PC-3 (cell line): ENCODE measurements at regions of chr1 and their contacts with region 1.

Region 1: GRCh38 chr1:197130677-197131304 is 15.7 kb downstream of the ASPM start:
- DNase-seq: peak; percentile 64
- ATAC-seq: peak; percentile 76
- H3K4me3 ChIP-seq: peak overlapping the region; percentile 35
- H3K27ac ChIP-seq: peak overlapping the region; percentile 54
- H3K4me1 ChIP-seq: peaks cover 27% of the 10 kb centered on the region
- H3K27me3 ChIP-seq: no peaks in the 10 kb centered on the region
- CTCF ChIP-seq: no peak

Region 2: GRCh38 chr1:196997423-196997822 is 133.4 kb before region 1 on chr1:
- CTCF ChIA-PET with region 1: no interaction called
- POLR2A ChIA-PET with region 1: no interaction called
- intact Hi-C with region 1: no loop called
- DNase-seq: peak; percentile 11
- ATAC-seq: no peak
- H3K4me3 ChIP-seq: no peak overlapping the region
- H3K27ac ChIP-seq: no peak overlapping the region
- H3K4me1 ChIP-seq: no peaks in the 10 kb centered on the region
- H3K27me3 ChIP-seq: no peaks in the 10 kb centered on the region
- CTCF ChIP-seq: no peak

Region 3: GRCh38 chr1:197027378-197027777 is 103.4 kb before region 1 on chr1:
- CTCF ChIA-PET with region 1: no interaction called
- POLR2A ChIA-PET with region 1: no interaction called
- intact Hi-C with region 1: loop called (anchors 5 kb)
- DNase-seq: peak; percentile 59
- ATAC-seq: peak; percentile 96
- H3K4me3 ChIP-seq: no peak overlapping the region
- H3K27ac ChIP-seq: no peak overlapping the region
- H3K4me1 ChIP-seq: peaks cover 6% of the 10 kb centered on the region; the same call in 1 of the 2 replicates
- H3K27me3 ChIP-seq: no peaks in the 10 kb centered on the region
- CTCF ChIP-seq: no peak

Region 4: GRCh38 chr1:197145446-197146196 is 14.8 kb after region 1 on chr1:
- CTCF ChIA-PET with region 1: no interaction called
- POLR2A ChIA-PET with region 1: no interaction called
- intact Hi-C with region 1: loop called (anchors 1 kb)
- DNase-seq: peak; percentile 16
- ATAC-seq: no peak; the same call in 1 of the 2 replicates
- H3K4me3 ChIP-seq: peak overlapping the region; percentile 97
- H3K27ac ChIP-seq: peak overlapping the region; percentile 59
- H3K4me1 ChIP-seq: peaks cover 4% of the 10 kb centered on the region; the same call in 1 of the 2 replicates
- H3K27me3 ChIP-seq: no peaks in the 10 kb centered on the region
- CTCF ChIP-seq: no peak